Activated T-helper 2 cell treated with anti-CD3 and anti-CD28 coated beads, Interferon-gamma antibody, Interleukin-2, Interleukin-4, amounts not matched to agents 10 μg/mL and 5 μg/mL and 100 μg/mL, durations not matched to agents 14 hours and 24 hours and 36 hours (primary cell): ENCODE measurements at regions of chr1 and their contacts with region 1.

Region 1: DNA sequence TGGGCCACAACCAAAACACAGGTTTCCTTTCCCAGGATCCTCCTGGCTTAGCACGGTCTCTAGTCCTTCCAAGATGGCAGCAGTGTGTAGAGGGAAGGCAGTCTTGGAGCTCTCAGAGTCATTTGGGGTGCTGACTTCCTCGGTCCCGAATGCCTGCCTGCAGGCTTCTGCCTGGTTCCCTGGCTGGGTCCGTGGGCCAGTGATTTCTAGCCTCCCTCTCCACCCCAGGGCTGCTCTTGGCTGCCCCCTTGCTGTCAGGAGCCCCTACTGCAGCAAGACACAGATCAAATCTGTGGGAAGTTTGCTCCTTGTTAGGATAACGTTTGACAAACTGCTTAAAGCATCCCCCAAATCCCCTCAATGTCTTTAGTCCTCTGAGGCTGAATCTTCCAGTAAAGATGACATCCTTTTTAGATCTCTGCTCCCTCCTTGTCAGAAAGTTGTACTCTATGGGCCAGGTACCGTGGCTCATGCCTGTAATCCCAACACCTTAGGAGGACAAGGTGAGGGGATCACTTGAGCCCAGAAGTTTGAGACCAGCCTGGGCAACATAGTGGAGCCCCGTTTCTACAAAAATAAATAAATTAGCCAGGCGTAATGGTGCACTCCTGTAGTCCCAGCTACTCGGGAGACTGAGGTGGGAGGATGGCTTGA is 272.5 kb downstream of the RRAGC start:
- DNase-seq: no peak
- H3K4me3 Mint-ChIP-seq: no peak overlapping the region
- H3K27ac Mint-ChIP-seq: no peak overlapping the region
- H3K4me1 Mint-ChIP-seq: peaks cover 10% of the 10 kb centered on the region
- H3K27me3 Mint-ChIP-seq: peaks cover 5% of the 10 kb centered on the region

Region 2: GRCh38 chr1:38489844-38490270 is 97.3 kb before region 1 on chr1:
- intact Hi-C with region 1: loop called (anchors 2 kb)
- DNase-seq: peak; percentile 30
- H3K4me3 Mint-ChIP-seq: no peak overlapping the region
- H3K27ac Mint-ChIP-seq: no peak overlapping the region
- H3K4me1 Mint-ChIP-seq: peaks cover 5% of the 10 kb centered on the region
- H3K27me3 Mint-ChIP-seq: peaks cover 34% of the 10 kb centered on the region

Region 3: GRCh38 chr1:38680801-38681510 is 93.8 kb after region 1 on chr1:
- intact Hi-C with region 1: no loop called
- DNase-seq: no peak
- H3K4me3 Mint-ChIP-seq: no peak overlapping the region
- H3K27ac Mint-ChIP-seq: no peak overlapping the region
- H3K4me1 Mint-ChIP-seq: no peaks in the 10 kb centered on the region
- H3K27me3 Mint-ChIP-seq: peaks cover 2% of the 10 kb centered on the region